Right ventricle myocardium inferior (tissue), 1 donor: ENCODE measurements at regions of chr6 and their contacts with region 1.

Region 1: DNA sequence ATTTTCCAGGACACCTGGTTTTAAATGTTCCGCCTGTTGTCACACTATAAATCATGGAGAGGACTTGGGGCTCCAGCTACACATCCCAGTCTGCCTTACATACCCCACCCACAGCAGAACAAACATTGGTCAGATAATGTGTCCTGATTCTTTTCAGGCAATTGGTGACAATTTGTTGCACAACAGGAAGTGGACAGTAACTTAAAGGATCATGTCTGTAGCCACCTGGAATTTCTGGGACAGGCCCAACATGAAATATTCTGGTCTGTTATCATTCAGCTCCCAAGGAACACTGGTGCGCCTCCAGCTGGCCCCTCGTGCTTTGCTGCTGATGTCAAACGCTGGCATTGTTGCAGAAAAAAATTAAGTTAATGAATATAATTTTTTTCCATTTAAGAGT is 117.2 kb downstream of the SOBP start:
- DNase-seq: peak; percentile 77
- ATAC-seq: peak; percentile 70

Region 2: DNA sequence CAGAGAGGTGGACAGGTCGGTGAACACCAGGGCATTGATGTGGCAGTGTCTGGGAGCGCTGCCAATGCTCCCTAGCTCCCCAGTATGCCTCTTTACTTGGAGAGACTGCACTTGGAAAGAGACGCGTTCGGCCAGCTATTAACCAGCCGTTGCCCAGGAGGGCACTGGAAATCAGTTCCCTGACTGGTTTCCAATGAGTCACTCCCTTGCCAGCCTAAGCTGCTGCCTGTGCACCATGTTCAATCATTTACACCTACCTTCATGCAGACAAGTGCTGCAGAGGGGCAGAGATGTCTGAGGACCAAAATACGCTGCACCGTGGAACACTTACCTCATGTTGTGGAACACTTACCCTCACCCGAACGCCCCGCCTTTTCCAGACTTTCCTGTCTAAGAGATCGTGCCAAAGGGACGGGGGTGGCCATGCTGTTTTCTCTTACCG is 34.4 kb after region 1 on chr6:
- intact Hi-C with region 1: loop called (anchors 5 kb)
- DNase-seq: peak; percentile 78
- ATAC-seq: peak; percentile 84

Region 3: DNA sequence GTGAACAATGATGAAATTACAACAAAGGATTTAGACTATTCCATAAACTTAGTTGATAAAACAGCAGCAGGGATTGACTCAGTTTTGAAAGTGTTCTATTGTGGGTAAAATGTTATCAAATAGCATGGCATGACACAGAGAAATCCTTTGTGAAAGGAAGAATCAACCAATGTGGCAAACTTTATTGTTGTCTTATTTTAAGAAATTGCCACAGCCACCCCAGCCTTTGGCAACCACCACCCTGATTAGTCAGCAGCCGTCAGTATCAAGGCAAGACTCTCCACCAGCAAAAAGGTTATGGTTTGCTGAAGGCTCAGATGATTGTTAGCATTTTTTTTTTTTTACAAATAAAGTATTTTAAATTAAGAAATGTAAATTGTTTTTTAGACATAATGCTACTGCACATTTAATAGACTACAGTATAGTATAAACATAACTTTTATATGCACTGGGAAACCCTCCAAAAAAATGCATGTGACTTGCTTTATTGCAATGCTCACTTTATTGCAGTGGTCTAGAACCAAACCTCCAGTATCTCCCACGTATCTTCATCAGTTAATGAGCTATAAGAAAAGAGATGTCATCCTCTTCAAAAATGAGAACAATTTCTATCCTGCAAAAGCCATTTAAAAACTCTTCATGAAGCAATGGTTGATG is 45.5 kb after region 1 on chr6:
- intact Hi-C with region 1: no loop called
- DNase-seq: no peak
- ATAC-seq: no peak

Region 4: GRCh38 chr6:108807928-108808327 is 1200.8 kb after region 1 on chr6:
- intact Hi-C with region 1: no loop called
- DNase-seq: no peak
- ATAC-seq: peak; percentile 44